ENCODE measurements at regions of chr6 and their contacts with region 1.

Region 1: DNA sequence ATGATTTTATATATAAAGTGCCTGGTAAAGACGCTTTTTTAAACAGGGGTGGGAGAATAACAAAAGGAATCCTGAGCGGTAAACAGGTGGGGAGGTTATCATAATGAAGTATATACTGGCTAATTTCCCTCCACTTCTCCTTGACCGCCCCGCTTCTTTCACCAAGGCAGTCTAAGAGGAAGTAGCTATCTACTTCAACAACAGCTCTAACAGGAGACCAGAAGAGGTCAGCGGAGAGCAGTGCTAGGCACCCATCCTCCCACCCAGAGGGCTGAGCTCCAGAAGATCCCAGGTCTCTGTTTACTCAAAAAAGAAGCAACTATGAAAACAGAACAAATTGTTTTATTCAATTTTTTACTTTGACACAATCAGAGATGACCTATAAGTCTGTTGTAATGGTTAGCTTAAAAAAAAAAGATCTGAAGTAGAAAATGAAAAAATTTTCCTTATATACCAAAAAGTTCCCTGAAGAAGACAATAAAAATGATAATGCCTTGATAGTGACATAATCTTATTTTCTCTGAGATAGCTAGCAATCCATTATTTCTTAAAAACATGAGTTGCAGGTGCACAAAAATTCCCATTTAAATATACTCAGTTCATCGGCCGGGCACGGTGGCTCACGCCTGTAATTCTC is 141.1 kb downstream of the PDSS2 start:
- DNase-seq: peak; percentile 57
- ATAC-seq: peak; percentile 64
- H3K4me3 Mint-ChIP-seq: no peak overlapping the region
- H3K27ac Mint-ChIP-seq: no peak overlapping the region
- H3K4me1 Mint-ChIP-seq: peaks cover 5% of the 10 kb centered on the region
- H3K27me3 Mint-ChIP-seq: no peaks in the 10 kb centered on the region

Region 2: DNA sequence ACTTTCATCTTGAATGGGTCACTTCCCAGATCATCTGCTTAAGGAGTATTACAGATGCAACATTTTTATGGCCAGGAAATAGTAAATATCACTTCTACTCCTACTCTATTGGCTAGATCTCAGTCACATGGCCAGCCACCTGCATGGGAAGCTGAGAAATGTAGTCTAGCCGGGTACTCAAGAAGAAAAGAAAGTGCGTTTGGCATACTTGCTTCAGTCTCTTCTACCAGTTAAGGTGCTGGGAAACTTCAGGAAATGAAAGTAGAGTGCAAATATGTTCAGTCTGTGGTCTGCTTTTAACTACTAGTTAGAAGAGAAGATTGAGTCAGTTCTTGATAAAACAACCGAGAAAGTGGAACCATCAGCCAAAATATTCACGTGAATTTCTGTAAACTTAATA is 11.9 kb after region 1 on chr6:
- CTCF ChIA-PET with region 1: interaction called, 20 read pairs
- POLR2A ChIA-PET with region 1: no interaction called
- DNase-seq: peak; percentile 35
- ATAC-seq: peak; percentile 79
- H3K4me3 Mint-ChIP-seq: peak overlapping the region; percentile 41
- H3K27ac Mint-ChIP-seq: peak overlapping the region; percentile 70
- H3K4me1 Mint-ChIP-seq: peaks cover 15% of the 10 kb centered on the region
- H3K27me3 Mint-ChIP-seq: no peaks in the 10 kb centered on the region

Region 3: GRCh38 chr6:107489636-107490565 is 171.7 kb after region 1 on chr6 and contains the start of gene SOBP:
- CTCF ChIA-PET with region 1: interaction called, 13 read pairs
- POLR2A ChIA-PET with region 1: interaction called, 4 read pairs
- DNase-seq: peak; percentile 50
- ATAC-seq: peak; percentile 62
- H3K4me3 Mint-ChIP-seq: peak within 1 kb of the TSS; percentile 81
- H3K27ac Mint-ChIP-seq: peak within 1 kb of the TSS; percentile 64
- H3K4me1 Mint-ChIP-seq: peaks cover 28% of the 10 kb centered on the region
- H3K27me3 Mint-ChIP-seq: peaks cover 55% of the 10 kb centered on the region
- total RNA-seq, gene SOBP: 1.0 to 1.2 TPM

Region 4: DNA sequence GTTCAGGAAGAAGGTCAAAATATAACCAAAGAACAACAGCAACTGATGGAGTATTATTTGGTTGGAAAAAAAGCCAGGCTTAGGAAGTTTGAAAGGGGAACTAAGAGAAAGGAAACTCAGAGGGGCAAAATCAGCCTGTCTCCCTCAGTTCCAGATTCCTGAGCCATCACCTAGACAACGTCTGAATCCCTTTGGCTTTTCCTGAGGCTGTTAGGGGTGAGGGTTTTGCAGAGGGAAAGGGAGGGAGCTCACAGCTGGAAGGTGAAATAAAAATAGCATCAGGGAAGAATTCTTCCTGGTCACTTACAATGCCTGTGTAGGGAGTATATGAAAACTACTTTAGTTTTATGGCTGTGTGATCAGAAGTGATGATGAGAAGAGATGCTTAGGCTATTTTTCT is 272.2 kb after region 1 on chr6:
- CTCF ChIA-PET with region 1: no interaction called
- POLR2A ChIA-PET with region 1: no interaction called
- DNase-seq: no peak
- ATAC-seq: no peak
- H3K4me3 Mint-ChIP-seq: no peak overlapping the region
- H3K27ac Mint-ChIP-seq: no peak overlapping the region
- H3K4me1 Mint-ChIP-seq: no peaks in the 10 kb centered on the region
- H3K27me3 Mint-ChIP-seq: peaks cover 33% of the 10 kb centered on the region

Region 5: DNA sequence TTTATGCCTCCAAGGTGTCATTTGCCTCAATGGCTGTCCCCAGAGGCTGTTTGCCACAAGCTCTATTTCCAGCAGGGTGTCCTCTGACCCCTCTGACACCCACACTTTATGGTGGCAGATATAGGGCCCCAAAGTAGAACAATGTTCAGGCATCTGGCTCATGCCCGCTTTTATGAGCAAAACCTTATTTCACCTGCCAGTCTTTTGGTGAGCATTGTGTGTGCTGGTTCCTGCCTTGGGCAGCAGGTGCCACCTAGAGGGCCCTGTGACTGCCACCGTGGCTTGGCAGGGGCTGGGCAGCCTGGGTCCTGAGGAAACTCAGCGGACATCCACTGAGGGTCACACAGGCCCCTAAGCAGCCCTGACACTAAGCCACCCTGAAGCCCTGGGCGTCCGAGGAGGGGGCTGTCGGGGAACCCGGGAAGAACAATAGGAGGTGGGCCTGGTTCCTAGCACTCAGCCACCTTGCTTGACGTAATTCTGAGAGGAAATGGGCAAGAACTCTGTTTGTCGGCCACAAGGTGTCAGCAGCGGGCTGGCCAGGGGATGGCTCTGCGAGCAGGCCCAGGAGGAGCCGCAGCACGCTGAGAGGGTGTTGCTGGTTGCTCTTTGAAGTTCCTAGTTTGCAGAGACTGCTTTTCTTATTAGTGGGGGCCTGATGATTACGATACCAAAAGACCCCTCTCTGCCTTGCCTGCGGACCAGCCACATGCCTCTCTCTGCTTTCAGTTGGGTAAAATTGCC is 356.9 kb after region 1 on chr6:
- CTCF ChIA-PET with region 1: interaction called, 54 read pairs
- POLR2A ChIA-PET with region 1: no interaction called
- DNase-seq: peak; percentile 93
- ATAC-seq: peak; percentile 99
- H3K4me3 Mint-ChIP-seq: peak overlapping the region; percentile 71
- H3K27ac Mint-ChIP-seq: peak overlapping the region; percentile 95
- H3K4me1 Mint-ChIP-seq: peaks cover 31% of the 10 kb centered on the region
- H3K27me3 Mint-ChIP-seq: peaks cover 2% of the 10 kb centered on the region

Region 6: GRCh38 chr6:107866606-107867301 is 548.5 kb after region 1 on chr6:
- CTCF ChIA-PET with region 1: interaction called, 11 read pairs
- POLR2A ChIA-PET with region 1: no interaction called
- DNase-seq: peak; percentile 58
- ATAC-seq: peak; percentile 57
- H3K4me3 Mint-ChIP-seq: no peak overlapping the region
- H3K27ac Mint-ChIP-seq: no peak overlapping the region
- H3K4me1 Mint-ChIP-seq: peaks cover 7% of the 10 kb centered on the region
- H3K27me3 Mint-ChIP-seq: no peaks in the 10 kb centered on the region